ENCODE measurements at regions of chr5 and their contacts with region 1.

Region 1: GRCh38 chr5:150458819-150459557 is 9.4 kb upstream of the RPS14 start:
- H3K4me3 Mint-ChIP-seq: peak overlapping the region; percentile 48
- H3K27ac Mint-ChIP-seq: no peak overlapping the region
- H3K4me1 Mint-ChIP-seq: peaks cover 20% of the 10 kb centered on the region
- H3K27me3 Mint-ChIP-seq: peaks cover 4% of the 10 kb centered on the region

Region 2: GRCh38 chr5:150523472-150524350 is 64.7 kb after region 1 on chr5:
- intact Hi-C with region 1: loop called (anchors 1 kb)
- H3K4me3 Mint-ChIP-seq: no peak overlapping the region
- H3K27ac Mint-ChIP-seq: peak overlapping the region; percentile 17
- H3K4me1 Mint-ChIP-seq: peaks cover 18% of the 10 kb centered on the region
- H3K27me3 Mint-ChIP-seq: no peaks in the 10 kb centered on the region

Region 3: DNA sequence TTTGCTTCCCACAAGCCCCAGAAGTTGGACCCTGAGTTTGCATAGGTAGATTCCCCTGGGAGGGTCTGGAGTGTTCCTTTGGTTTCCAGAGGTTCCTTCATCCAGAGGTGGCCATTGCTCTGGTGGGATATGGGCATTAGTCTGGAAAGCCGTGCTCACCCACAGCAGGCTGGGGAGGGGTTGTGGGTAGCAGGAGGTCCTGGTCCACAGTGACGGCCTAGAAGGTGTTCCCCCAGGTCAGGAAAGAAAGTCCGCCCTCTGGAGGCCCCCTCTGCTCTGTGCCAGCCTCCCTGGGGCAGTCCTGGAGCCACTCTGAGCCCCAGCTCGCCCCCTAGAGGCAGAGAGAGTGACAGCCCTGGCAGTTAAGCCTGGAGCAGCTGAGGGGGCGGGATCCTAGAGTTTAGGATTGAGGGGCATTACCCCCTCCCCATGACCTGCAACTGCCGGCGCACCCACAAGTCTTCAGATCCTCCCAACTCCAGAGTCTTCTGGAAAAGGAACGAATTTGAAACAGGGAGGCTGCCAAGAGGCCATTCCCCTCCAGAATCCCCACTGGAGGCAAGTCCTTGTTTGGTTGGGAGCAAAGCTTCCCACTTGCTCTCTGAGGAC is 85.7 kb after region 1 on chr5:
- intact Hi-C with region 1: loop called (anchors 2 kb)
- H3K4me3 Mint-ChIP-seq: no peak overlapping the region
- H3K27ac Mint-ChIP-seq: no peak overlapping the region
- H3K4me1 Mint-ChIP-seq: no peaks in the 10 kb centered on the region
- H3K27me3 Mint-ChIP-seq: no peaks in the 10 kb centered on the region

Region 4: DNA sequence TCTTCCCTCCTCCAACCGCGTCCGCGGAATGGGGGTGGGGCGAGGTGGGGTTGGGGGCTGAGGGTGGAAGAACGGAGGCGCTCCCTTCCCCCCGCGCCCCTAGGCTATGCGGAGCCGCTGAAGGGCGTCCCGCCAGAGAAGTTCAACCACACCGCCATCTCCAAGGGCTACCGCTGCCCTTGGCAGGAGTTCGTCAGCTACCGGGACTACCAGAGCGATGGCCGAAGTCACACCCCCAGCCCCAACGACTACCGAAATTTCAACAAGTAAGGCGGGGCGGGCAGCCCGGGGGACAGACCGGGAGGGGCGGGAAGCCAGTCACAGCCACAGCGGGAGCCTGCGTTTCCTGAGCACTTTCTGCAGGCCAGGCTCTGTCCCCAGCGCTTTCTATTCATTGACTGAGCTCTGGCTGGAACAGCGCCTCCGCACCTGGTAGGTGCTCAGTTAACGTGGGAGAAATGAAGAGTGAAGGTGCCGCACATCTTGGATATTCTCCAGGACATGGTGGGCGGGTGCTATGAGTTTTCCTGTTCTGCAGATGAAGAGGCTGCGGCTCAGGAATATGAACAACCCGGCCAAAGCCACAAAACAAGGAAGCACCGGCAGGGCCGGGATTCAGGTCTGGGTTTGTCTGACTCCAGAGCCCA is 213.4 kb after region 1 on chr5:
- intact Hi-C with region 1: no loop called
- H3K4me3 Mint-ChIP-seq: peak overlapping the region; percentile 72
- H3K27ac Mint-ChIP-seq: no peak overlapping the region
- H3K4me1 Mint-ChIP-seq: peaks cover 26% of the 10 kb centered on the region
- H3K27me3 Mint-ChIP-seq: peaks cover 26% of the 10 kb centered on the region

Region 5: GRCh38 chr5:151619796-151620460 is 1160.9 kb after region 1 on chr5:
- intact Hi-C with region 1: no loop called
- H3K4me3 Mint-ChIP-seq: no peak overlapping the region
- H3K27ac Mint-ChIP-seq: no peak overlapping the region
- H3K4me1 Mint-ChIP-seq: no peaks in the 10 kb centered on the region
- H3K27me3 Mint-ChIP-seq: peaks cover 16% of the 10 kb centered on the region